Heart right ventricle (tissue), 16 donors: ENCODE measurements at regions of chr7 and their contacts with region 1.

Region 1: GRCh38 chr7:1225441-1226185 is 7.1 kb upstream of the UNCX start:
- DNase-seq: no peak
- ATAC-seq: peak in 6 of 8 donors; percentile 45 to 74 (median 60)
- H3K4me3 ChIP-seq: no peak overlapping the region
- H3K27ac ChIP-seq: no peak overlapping the region
- H3K4me1 ChIP-seq: peaks cover 0 to 26% (median 13%) of the 10 kb centered on the region in 9 donors
- H3K27me3 ChIP-seq: peaks cover 62 to 100% (median 97%) of the 10 kb centered on the region in 7 donors
- CTCF ChIP-seq: peak; percentile 55 to 91 (median 81)

Region 2: DNA sequence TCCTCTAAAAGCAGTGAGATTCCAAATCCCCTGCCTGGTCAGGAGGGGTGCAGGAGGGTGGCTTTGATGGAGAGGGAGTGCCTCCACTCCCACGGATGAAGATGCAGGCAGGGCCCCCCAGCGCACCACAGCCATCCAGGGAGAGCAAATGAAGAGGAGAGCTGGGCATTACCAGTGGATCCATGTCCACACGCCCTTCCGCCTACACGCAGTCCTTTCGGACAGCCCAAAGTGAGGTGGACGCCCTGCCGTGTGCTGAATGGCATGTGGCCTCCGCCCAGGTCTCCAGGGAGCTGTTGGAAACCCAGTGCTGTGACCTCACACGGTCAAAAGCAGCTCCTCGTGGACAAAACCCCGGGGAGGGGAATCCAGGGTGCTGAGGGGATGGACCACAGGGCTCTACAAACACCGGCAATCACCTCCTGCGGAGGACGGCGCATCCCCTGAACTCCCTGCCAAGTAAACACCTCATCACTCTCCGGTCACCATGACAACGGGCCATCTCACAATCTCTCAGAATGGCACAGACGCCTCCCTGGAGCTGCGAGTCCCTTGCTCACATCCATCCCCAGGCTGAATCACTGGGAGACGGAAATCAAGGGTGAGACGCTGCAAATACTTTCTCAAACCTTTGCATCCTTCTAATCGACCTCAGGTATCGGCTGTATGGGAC is 534.1 kb before region 1 on chr7:
- intact Hi-C with region 1: no loop called
- DNase-seq: no peak
- ATAC-seq: no peak
- H3K4me3 ChIP-seq: no peak overlapping the region
- H3K27ac ChIP-seq: no peak overlapping the region
- H3K4me1 ChIP-seq: peaks cover 0 to 4% (median 0%) of the 10 kb centered on the region in 9 donors
- H3K27me3 ChIP-seq: no peaks in the 10 kb centered on the region
- CTCF ChIP-seq: no peak

Region 3: DNA sequence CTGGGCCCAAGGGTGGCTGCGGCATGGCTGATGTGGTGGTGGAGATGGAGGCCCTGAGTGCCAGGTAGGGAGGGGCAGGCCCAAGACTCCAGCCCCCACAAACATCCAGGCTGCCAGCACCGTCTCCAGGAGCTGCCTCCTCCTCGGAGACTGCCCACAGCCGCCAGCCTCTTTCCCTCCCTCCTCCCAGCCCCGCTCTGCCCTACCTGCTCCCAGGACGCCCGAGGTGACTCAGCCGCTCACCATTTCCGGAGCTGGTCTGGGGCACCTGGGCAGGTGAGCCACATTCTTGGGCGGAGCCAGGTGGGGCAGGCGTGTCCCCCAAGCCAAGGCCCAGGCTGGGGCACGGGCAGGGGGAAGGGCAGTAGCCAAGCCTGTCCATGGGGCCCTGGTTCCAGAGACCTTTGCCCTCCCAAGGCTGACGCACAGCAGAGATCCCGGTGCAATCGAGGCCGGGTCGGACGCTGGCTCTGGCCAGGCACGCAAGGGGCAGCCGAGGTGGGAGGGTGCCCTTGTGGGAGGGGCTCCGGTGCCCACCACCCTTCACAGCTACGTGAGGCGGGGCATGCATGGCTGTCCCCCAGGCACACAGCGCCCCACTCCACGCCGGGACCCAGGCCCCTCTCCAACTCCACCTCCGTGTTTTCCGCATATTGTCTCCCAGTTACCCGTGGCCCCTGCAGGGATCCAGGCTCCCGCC is 279.9 kb before region 1 on chr7:
- intact Hi-C with region 1: no loop called
- DNase-seq: peak in 1 of 2 donors; percentile 8
- ATAC-seq: peak in 4 of 8 donors; percentile 9 to 48 (median 40)
- H3K4me3 ChIP-seq: no peak overlapping the region
- H3K27ac ChIP-seq: no peak overlapping the region
- H3K4me1 ChIP-seq: peaks cover 0 to 7% (median 0%) of the 10 kb centered on the region in 9 donors
- H3K27me3 ChIP-seq: peaks cover 0 to 21% (median 0%) of the 10 kb centered on the region in 7 donors
- CTCF ChIP-seq: no peak

Region 4: DNA sequence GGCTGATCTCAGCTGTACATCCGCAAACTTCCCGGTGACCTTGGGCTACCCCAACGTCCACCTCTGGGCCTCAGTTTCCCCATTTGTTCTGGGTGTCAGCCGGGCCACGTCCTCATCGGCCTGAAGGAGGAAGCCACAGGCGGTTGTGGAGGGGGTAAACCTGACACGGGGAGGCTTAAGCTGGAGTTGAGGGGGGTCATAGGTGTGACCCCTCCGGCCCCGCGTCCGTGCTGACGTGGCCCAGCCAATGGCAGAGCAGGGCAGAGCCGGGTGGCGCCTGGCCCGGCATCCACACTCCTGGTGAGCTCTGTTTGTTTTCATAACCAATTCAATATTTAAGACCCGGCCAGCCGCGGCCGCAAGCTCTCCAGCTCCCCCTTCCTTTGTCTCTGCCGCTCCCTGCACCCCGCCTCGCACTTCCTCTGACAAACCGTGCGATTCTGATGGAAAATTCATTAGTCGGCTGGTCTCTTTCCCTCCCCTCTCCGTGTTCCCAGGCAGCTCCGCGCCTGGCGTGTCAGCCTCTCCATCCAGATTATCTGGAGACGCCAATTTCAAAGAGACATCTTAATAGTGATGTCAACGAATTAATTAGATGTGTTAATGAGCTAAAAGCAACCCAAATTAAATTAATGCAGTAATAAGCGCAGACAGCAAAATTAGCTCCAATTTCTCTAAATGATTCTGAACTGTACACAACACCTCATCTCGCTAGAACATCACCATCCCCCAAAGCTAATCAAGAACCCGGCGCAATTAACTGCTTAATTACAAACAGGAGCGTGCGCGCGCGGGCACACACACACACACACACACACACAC is 178.2 kb after region 1 on chr7:
- intact Hi-C with region 1: loop called in 1 of 10 experiments (anchors 10 kb)
- DNase-seq: peak in 1 of 2 donors; percentile 50
- ATAC-seq: peak in 7 of 8 donors; percentile 32 to 88 (median 78)
- H3K4me3 ChIP-seq: peak overlapping the region in 4 of 10 donors; percentile 3 to 31 (median 14)
- H3K27ac ChIP-seq: no peak overlapping the region
- H3K4me1 ChIP-seq: peaks cover 0 to 13% (median 10%) of the 10 kb centered on the region in 9 donors
- H3K27me3 ChIP-seq: peaks cover 3 to 84% (median 81%) of the 10 kb centered on the region in 7 donors
- CTCF ChIP-seq: peak in 5 of 9 donors; percentile 19 to 48 (median 38)

Region 5: GRCh38 chr7:1412322-1413261 is 187.0 kb after region 1 on chr7:
- intact Hi-C with region 1: loop called in 6 of 10 experiments (anchors 5 to 10 kb)
- DNase-seq: peak; percentile 68 to 76
- ATAC-seq: peak; percentile 89 to 94 (median 92)
- H3K4me3 ChIP-seq: peak overlapping the region in 1 of 10 donors; percentile 26
- H3K27ac ChIP-seq: no peak overlapping the region
- H3K4me1 ChIP-seq: peaks cover 0 to 13% (median 7%) of the 10 kb centered on the region in 9 donors
- H3K27me3 ChIP-seq: peaks cover 9 to 71% (median 61%) of the 10 kb centered on the region in 7 donors
- CTCF ChIP-seq: peak; percentile 37 to 85 (median 79)

Region 6: GRCh38 chr7:1418505-1419309 is 193.1 kb after region 1 on chr7:
- intact Hi-C with region 1: loop called in 6 of 10 experiments (anchors 5 to 10 kb)
- DNase-seq: no peak
- ATAC-seq: no peak
- H3K4me3 ChIP-seq: no peak overlapping the region
- H3K27ac ChIP-seq: no peak overlapping the region
- H3K4me1 ChIP-seq: peaks cover 0 to 11% (median 3%) of the 10 kb centered on the region in 9 donors
- H3K27me3 ChIP-seq: peaks cover 0 to 61% (median 45%) of the 10 kb centered on the region in 7 donors
- CTCF ChIP-seq: no peak

Region 7: DNA sequence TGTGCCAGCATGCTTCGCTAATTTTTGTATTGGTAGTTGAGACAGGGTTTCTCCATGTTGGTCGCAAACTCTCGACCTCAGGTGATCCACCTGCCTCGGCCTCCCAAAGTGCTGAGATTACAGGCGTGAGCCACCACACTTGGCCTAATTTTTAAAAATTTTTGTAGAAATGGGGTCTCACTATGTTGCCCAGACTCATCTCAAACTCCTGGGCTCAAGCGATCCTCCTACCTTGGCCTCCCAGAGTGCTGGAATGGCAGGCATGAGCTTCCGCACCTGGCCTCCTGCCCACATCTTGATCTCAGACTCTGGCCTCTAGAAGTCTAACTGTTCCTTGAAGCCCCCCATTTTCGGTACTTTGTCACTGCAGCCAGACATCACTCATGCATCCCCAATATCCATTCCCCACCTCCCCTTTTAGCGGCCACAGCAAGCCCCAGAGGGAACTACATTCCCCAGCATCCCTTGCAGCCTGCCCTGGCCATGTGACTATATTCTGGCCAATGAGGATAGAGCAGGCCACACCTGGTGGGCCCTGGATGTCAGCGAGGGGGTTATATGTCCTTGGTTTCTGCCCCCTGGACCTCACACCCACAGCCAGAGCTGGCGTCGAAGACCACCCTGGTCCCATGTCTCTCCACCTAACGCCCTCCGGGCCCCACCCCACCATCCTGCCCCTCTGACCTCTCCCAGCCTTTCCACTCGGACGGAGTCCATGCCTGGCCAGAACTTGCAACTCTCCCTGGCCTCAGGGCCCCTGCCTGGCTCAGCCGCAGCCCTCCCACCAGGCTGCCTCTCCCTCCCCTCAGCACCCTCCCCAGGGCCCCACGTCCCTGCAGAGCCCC is 199.9 kb after region 1 on chr7:
- intact Hi-C with region 1: loop called in 6 of 10 experiments (anchors 5 to 10 kb)
- DNase-seq: no peak
- ATAC-seq: peak in 1 of 8 donors; percentile 22
- H3K4me3 ChIP-seq: no peak overlapping the region
- H3K27ac ChIP-seq: no peak overlapping the region
- H3K4me1 ChIP-seq: peaks cover 0 to 8% (median 3%) of the 10 kb centered on the region in 9 donors
- H3K27me3 ChIP-seq: peaks cover 5 to 68% (median 53%) of the 10 kb centered on the region in 7 donors
- CTCF ChIP-seq: no peak

Region 8: DNA sequence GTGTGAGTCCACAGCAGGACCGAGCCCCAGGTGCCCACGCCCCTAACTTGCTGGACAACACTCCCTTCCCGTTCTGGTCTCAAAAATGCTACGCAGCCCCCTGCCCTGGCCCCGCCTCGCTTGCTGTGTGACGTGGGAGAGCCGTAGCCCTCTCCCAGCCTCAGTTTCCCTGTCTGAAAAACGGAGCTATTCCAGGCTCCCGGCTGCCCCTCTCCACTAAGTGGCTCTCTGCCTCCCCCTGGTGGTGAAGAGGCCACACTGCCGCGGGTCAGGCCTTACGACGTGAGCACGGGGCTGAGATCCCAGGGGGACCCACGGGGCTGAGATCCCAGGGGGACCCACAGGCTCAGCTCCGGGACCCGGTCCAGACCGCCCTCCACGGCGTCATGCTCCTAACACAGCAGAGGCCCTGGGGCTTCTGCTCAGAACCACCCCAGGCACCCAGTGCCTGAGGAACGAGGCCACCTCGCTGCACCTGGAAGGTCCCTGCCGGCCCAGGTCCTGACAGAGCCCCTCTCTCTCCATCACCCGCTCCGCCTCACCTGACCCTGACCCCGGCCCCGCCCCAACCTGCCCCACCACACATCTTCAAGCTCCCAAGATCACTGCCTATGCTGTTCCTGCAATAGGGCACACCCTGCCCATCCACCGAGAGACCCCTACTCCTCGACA is 206.9 kb after region 1 on chr7:
- intact Hi-C with region 1: loop called in 7 of 10 experiments (anchors 2 to 10 kb)
- DNase-seq: peak; percentile 65 to 78
- ATAC-seq: peak; percentile 48 to 83 (median 65)
- H3K4me3 ChIP-seq: no peak overlapping the region
- H3K27ac ChIP-seq: no peak overlapping the region
- H3K4me1 ChIP-seq: peaks cover 0 to 8% (median 0%) of the 10 kb centered on the region in 9 donors
- H3K27me3 ChIP-seq: peaks cover 5 to 41% (median 34%) of the 10 kb centered on the region in 7 donors
- CTCF ChIP-seq: peak; percentile 87 to 99 (median 97)

Region 9: GRCh38 chr7:1473864-1474512 is 248.4 kb after region 1 on chr7:
- intact Hi-C with region 1: loop called in 7 of 10 experiments (anchors 2 to 10 kb)
- DNase-seq: peak; percentile 86 to 88
- ATAC-seq: peak; percentile 48 to 83 (median 72)
- H3K4me3 ChIP-seq: no peak overlapping the region
- H3K27ac ChIP-seq: no peak overlapping the region
- H3K4me1 ChIP-seq: peaks cover 0 to 11% (median 4%) of the 10 kb centered on the region in 9 donors
- H3K27me3 ChIP-seq: no peaks in the 10 kb centered on the region
- CTCF ChIP-seq: peak; percentile 78 to 95 (median 94)